ENCODE measurements at regions of chr18 and their contacts with region 1.

Region 1: GRCh38 chr18:34787931-34788532 is 77.9 kb downstream of the DTNA start:
- DNase-seq: no peak
- ATAC-seq: peak; percentile 50

Region 2: DNA sequence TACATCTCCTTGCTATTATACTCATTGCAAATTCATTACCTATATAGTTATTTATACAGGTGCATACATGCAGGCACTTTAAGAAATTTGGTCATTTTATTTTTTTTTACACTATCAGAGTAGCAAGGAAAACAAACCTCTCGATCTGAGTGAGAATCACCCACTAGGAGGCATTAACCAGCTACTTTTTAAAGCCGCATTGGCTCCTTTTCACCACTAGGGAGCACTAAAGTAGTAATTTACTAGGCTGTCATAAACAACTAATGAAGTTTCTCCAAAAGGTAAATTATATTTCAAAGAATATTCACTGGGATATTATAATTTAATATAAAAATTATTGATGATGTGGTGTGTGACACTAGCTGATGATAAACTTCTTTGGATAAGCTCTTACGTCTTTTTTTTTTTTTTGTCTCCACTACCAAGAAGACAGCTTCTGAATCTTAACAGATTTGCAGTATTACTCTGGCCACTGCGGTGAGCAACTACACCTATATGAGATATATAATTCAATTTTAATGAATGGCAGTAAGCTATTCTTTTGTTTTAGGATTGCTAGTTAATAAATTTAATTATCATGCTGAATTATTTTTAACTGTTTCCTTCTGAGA is 665.2 kb before region 1 on chr18:
- intact Hi-C with region 1: loop called (anchors 10 kb)
- DNase-seq: no peak
- ATAC-seq: no peak

Region 3: GRCh38 chr18:34352385-34353163 is 435.5 kb before region 1 on chr18:
- intact Hi-C with region 1: loop called (anchors 2 kb)
- DNase-seq: no peak
- ATAC-seq: no peak

Region 4: GRCh38 chr18:34493099-34493544 is 294.9 kb before region 1 on chr18:
- intact Hi-C with region 1: loop called (anchors 2 kb)
- DNase-seq: peak; percentile 80
- ATAC-seq: peak; percentile 86

Region 5: GRCh38 chr18:34592961-34593382 is 195.1 kb before region 1 on chr18:
- intact Hi-C with region 1: loop called (anchors 5 kb)
- DNase-seq: no peak
- ATAC-seq: peak; percentile 91

Region 6: DNA sequence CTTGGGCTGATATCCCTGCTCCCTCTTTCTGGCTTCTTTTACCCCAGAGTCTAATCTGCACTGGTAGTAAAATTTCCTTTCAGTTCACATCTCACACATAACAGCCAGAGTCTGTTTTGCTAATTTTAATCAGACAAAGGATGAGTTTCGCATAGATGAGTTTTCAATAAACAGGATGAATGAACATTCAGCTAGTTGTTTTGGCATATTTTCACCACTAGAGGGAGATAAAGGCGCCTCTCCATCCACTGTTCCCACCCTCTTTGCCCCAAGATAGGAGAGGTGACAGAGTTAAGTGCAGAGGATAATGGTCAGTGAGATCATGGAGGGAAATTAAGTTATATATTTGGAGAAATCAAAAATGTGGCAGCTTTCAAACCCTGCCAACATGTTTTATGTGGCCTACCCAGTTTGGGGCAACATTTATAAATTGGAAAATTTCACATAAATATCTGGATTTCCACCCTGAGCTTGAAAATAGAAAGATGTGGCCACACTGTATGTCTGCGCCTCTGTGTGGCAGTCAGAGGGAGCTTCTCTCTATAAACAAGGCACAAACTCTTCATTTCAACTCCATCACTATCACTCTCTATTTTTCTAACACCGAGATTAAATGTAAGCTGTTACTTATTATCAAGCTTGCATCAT is 126.4 kb before region 1 on chr18:
- intact Hi-C with region 1: loop called (anchors 5 kb)
- DNase-seq: no peak
- ATAC-seq: no peak